ENCODE measurements at regions of chr12 and their contacts with region 1.

Region 1: DNA sequence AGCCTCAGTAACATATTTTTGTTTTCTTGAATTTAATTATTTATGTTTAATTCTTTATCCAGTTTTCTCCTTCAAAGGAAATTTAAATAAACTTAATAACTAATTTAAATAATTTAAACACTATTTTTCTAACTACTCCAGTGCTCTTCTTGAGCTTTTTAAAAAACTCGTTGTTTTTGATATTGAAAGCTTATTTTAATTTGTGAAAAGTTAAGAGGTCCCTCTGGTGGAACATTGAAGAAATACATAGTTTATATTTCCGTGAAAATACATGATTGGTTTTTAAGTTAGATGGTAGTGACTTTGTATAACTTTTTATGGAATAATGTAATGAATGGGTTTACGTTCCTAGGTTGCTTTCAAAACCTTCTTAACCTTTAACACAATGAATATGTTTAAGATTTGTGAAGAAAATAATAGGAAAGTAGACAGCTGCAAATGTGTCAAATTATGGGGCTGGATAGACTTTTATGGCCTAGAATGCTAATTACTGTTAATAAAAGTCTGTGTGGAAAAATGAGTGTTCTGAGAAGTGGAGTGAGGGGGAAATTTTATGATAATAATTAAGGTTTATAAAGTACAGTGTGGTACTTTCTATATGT is 45.9 kb upstream of the MSRB3 start:
- DNase-seq: peak in 6 of 9 donors; percentile 8 to 39 (median 20)
- ATAC-seq: peak; percentile 51
- H3K4me3 ChIP-seq: no peak overlapping the region
- H3K4me3 Mint-ChIP-seq: peak overlapping the region in 2 of 10 donors; percentile 10 to 25
- H3K27ac ChIP-seq: no peak overlapping the region
- H3K27ac Mint-ChIP-seq: peak overlapping the region in 1 of 9 donors; percentile 36
- H3K4me1 ChIP-seq: no peaks in the 10 kb centered on the region
- H3K4me1 Mint-ChIP-seq: peaks cover 0 to 15% (median 12%) of the 10 kb centered on the region in 7 donors
- H3K27me3 ChIP-seq: no peaks in the 10 kb centered on the region
- H3K27me3 Mint-ChIP-seq: no peaks in the 10 kb centered on the region

Region 2: GRCh38 chr12:64801381-64801780 is 431.2 kb before region 1 on chr12:
- CTCF ChIA-PET with region 1: no interaction called
- POLR2A ChIA-PET with region 1: no interaction called
- intact Hi-C with region 1: loop called (anchors 1 to 2 kb)
- DNase-seq: no peak
- ATAC-seq: no peak
- H3K4me3 ChIP-seq: no peak overlapping the region
- H3K4me3 Mint-ChIP-seq: no peak overlapping the region
- H3K27ac ChIP-seq: no peak overlapping the region
- H3K27ac Mint-ChIP-seq: no peak overlapping the region
- H3K4me1 ChIP-seq: no peaks in the 10 kb centered on the region
- H3K4me1 Mint-ChIP-seq: peaks cover 0 to 6% (median 0%) of the 10 kb centered on the region in 7 donors
- H3K27me3 ChIP-seq: no peaks in the 10 kb centered on the region
- H3K27me3 Mint-ChIP-seq: peaks cover 17 to 38% (median 32%) of the 10 kb centered on the region in 5 donors

Region 3: GRCh38 chr12:65067383-65067782 is 165.2 kb before region 1 on chr12:
- CTCF ChIA-PET with region 1: no interaction called
- POLR2A ChIA-PET with region 1: no interaction called
- intact Hi-C with region 1: loop called in 1 of 2 experiments (anchors 10 kb)
- DNase-seq: no peak
- ATAC-seq: no peak
- H3K4me3 ChIP-seq: no peak overlapping the region
- H3K4me3 Mint-ChIP-seq: no peak overlapping the region
- H3K27ac ChIP-seq: no peak overlapping the region
- H3K27ac Mint-ChIP-seq: no peak overlapping the region
- H3K4me1 ChIP-seq: no peaks in the 10 kb centered on the region
- H3K4me1 Mint-ChIP-seq: no peaks in the 10 kb centered on the region
- H3K27me3 ChIP-seq: peaks cover 3 to 5% of the 10 kb centered on the region in 2 donors
- H3K27me3 Mint-ChIP-seq: peaks cover 15 to 33% (median 29%) of the 10 kb centered on the region in 5 donors

Region 4: GRCh38 chr12:65156366-65156841 is 76.2 kb before region 1 on chr12:
- CTCF ChIA-PET with region 1: interaction called, 3 read pairs
- POLR2A ChIA-PET with region 1: no interaction called
- intact Hi-C with region 1: loop called in 1 of 2 experiments (anchors 1 kb)
- DNase-seq: peak in 6 of 9 donors; percentile 14 to 43 (median 26)
- ATAC-seq: peak; percentile 49
- H3K4me3 ChIP-seq: no peak overlapping the region
- H3K4me3 Mint-ChIP-seq: peak overlapping the region in 6 of 10 donors; percentile 4 to 53 (median 36)
- H3K27ac ChIP-seq: no peak overlapping the region
- H3K27ac Mint-ChIP-seq: peak overlapping the region in 6 of 9 donors; percentile 3 to 73 (median 37)
- H3K4me1 ChIP-seq: peaks cover 0 to 10% of the 10 kb centered on the region in 2 donors
- H3K4me1 Mint-ChIP-seq: peaks cover 6 to 16% (median 11%) of the 10 kb centered on the region in 7 donors
- H3K27me3 ChIP-seq: no peaks in the 10 kb centered on the region
- H3K27me3 Mint-ChIP-seq: peaks cover 12 to 27% (median 25%) of the 10 kb centered on the region in 5 donors

Region 5: DNA sequence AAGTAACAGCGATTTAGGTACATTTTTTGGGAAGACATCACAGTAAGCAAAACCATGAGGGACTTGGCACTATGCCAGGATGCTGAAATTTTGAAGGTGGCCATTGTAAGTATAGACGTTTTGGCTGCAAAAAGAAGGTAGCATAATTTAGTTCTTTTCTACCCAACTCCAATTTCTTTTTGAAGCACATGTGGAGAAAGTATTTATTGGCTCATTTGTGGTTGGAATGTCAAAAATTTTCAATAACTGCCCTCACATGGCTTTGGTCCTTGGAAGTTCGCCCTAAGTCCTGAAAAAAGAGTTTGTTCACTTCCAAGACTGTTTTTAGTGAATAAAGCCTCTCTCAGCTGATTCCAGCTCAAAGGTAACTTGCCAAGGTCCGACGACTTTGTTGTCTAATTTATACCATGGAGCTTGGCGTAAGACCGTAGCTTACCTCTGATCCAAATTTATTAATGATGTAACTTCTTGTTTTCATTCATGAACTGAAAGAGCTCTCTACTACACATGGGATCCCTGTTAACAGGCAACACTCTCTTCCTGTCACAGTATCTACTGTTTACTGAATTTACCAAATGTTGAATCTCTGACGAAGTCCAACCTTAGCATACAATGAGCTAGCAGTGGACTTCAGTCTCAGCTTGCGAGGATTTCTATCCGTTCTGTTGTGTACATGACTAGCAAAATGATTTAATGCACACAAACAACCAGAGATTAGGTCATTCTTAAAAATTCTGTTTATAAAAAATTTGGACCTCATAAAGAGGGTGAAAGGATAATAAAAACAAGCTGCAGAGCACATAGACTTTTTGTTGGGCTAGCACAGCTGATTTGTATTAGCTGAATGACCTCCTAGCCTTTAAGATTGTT is 94.9 kb after region 1 on chr12:
- CTCF ChIA-PET with region 1: no interaction called
- POLR2A ChIA-PET with region 1: no interaction called
- intact Hi-C with region 1: no loop called
- DNase-seq: no peak
- ATAC-seq: no peak
- H3K4me3 ChIP-seq: no peak overlapping the region
- H3K4me3 Mint-ChIP-seq: no peak overlapping the region
- H3K27ac ChIP-seq: no peak overlapping the region
- H3K27ac Mint-ChIP-seq: no peak overlapping the region
- H3K4me1 ChIP-seq: no peaks in the 10 kb centered on the region
- H3K4me1 Mint-ChIP-seq: no peaks in the 10 kb centered on the region
- H3K27me3 ChIP-seq: no peaks in the 10 kb centered on the region
- H3K27me3 Mint-ChIP-seq: peaks cover 0 to 32% (median 11%) of the 10 kb centered on the region in 5 donors

Region 6: DNA sequence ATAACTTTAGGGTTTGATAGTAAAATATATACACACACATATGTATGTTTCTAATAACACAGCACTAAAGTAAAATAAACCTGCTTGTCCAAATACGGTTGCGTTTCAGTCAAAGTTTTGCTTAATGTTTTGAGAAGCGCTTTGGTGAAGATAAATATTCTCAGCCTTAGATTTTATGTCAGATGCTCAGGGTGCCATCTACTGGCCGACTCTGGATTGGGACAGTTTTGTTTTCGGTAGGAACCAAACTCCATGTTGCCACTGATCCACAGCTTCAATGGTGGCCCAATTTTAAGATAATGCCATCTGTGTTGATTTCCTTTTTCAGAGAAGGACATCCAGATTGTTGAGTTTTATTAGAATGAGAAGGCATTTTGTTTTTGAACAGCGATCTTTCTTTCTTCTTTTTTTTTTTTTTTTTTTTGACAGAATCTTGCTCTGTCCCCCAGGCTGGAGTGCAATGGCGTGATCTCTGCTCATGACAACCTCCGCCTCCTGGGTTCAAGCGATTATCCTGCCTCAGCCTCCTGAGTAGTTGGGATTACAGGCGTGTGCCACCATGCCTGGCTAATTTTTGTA is 854.9 kb after region 1 on chr12:
- CTCF ChIA-PET with region 1: no interaction called
- POLR2A ChIA-PET with region 1: no interaction called
- intact Hi-C with region 1: loop called in 1 of 2 experiments (anchors 10 kb)
- DNase-seq: peak in 7 of 9 donors; percentile 9 to 42 (median 29)
- ATAC-seq: peak; percentile 72
- H3K4me3 ChIP-seq: no peak overlapping the region
- H3K4me3 Mint-ChIP-seq: no peak overlapping the region
- H3K27ac ChIP-seq: no peak overlapping the region
- H3K27ac Mint-ChIP-seq: no peak overlapping the region
- H3K4me1 ChIP-seq: no peaks in the 10 kb centered on the region
- H3K4me1 Mint-ChIP-seq: no peaks in the 10 kb centered on the region
- H3K27me3 ChIP-seq: peaks cover 0 to 5% of the 10 kb centered on the region in 2 donors
- H3K27me3 Mint-ChIP-seq: peaks cover 13 to 30% (median 27%) of the 10 kb centered on the region in 5 donors